ENCODE measurements at regions of chr10 and their contacts with region 1.

Region 1: GRCh38 chr10:88810196-88810961 is 7.8 kb downstream of the LIPM start:
- DNase-seq: peak in 4 of 5 donors; percentile 7 to 56 (median 28)
- H3K4me3 ChIP-seq: no peak overlapping the region
- H3K4me3 Mint-ChIP-seq: no peak overlapping the region
- H3K27ac ChIP-seq: no peak overlapping the region
- H3K27ac Mint-ChIP-seq: peak overlapping the region in 2 of 8 donors; percentile 60 to 83
- H3K4me1 ChIP-seq: peaks cover 17% of the 10 kb centered on the region
- H3K4me1 Mint-ChIP-seq: peaks cover 10 to 18% (median 18%) of the 10 kb centered on the region in 3 donors
- H3K27me3 ChIP-seq: no peaks in the 10 kb centered on the region
- H3K27me3 Mint-ChIP-seq: no peaks in the 10 kb centered on the region

Region 2: DNA sequence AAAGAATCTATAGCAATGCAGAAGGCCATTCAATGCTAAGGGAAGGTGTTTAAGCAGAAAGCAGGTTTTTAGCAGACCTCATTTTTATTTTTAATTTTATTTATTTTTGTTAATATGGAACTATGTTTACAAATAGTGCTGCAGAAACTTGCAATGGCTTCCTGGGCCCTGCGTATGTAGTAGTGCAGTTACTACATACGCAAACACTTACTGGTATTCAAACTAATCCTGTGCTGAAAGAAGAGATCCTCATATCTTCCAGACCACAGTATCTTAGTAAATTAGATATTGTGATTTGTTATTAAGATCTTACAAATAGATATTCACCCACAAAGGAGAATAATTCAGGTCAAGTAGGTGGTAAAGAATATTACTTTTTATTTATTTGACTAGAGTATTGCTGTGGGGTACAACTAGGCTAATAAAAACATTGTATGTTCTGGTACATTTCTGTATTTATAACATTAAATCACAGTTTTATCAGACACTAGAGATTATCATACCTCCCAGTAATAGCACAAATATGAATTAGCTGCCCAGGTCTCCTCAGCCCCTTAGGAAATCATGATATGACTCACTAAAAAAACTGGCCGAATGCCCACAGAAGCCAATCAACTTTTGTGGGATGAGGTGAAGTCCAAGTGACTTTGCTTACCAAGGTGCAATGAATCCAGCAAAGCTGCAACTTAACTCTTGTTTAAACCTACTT is 284.9 kb before region 1 on chr10:
- CTCF ChIA-PET with region 1: no interaction called
- POLR2A ChIA-PET with region 1: no interaction called
- DNase-seq: no peak
- H3K4me3 ChIP-seq: no peak overlapping the region
- H3K4me3 Mint-ChIP-seq: no peak overlapping the region
- H3K27ac ChIP-seq: no peak overlapping the region
- H3K27ac Mint-ChIP-seq: no peak overlapping the region
- H3K4me1 ChIP-seq: no peaks in the 10 kb centered on the region
- H3K4me1 Mint-ChIP-seq: no peaks in the 10 kb centered on the region
- H3K27me3 ChIP-seq: no peaks in the 10 kb centered on the region
- H3K27me3 Mint-ChIP-seq: peaks cover 0 to 1% of the 10 kb centered on the region in 2 donors

Region 3: DNA sequence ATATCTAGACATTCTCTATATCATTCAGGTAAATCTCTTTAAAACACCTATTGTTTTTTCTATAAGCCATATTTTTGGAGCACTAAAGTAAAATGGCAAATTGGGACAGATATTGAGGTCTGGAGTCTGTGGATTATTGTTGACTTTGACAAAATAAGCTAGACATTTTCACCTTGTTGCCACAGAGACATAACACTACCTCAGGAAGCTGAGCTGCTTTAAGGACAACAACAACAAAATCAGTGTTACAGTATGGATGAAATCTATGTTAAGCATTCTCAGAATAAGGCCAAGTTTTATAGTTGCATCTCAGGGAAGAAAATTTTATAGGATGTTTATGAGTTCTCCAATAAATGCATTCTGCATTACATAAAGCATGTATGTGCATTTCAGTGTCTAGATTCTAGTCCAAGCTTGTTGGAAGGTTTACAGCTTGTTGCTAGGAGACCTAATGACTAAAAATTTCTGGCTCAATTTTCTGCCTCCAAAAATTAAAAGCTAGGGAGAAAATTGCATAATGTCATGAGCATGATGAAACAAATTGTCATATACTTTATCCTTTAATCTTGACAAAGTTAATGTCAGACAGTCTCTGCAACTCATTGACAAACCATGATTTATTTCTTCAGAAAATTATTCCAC is 10.5 kb after region 1 on chr10:
- CTCF ChIA-PET with region 1: interaction called, 42 read pairs
- POLR2A ChIA-PET with region 1: interaction called, 3 read pairs
- DNase-seq: no peak
- H3K4me3 ChIP-seq: no peak overlapping the region
- H3K4me3 Mint-ChIP-seq: no peak overlapping the region
- H3K27ac ChIP-seq: no peak overlapping the region
- H3K27ac Mint-ChIP-seq: peak overlapping the region in 2 of 8 donors; percentile 6 to 36
- H3K4me1 ChIP-seq: peaks cover 33% of the 10 kb centered on the region
- H3K4me1 Mint-ChIP-seq: peaks cover 36 to 72% (median 63%) of the 10 kb centered on the region in 3 donors
- H3K27me3 ChIP-seq: no peaks in the 10 kb centered on the region
- H3K27me3 Mint-ChIP-seq: no peaks in the 10 kb centered on the region